CD8-positive, alpha-beta T cell (primary cell): ENCODE measurements at regions of chr9 and their contacts with region 1.

Region 1: GRCh38 chr9:137000177-137000883 is 4.0 kb upstream of the CLIC3 start:
- DNase-seq: peak in 2 of 9 experiments; percentile 65 to 80
- ATAC-seq: peak; percentile 32
- H3K4me3 ChIP-seq: peak overlapping the region in 1 of 2 experiments; percentile 18
- H3K4me3 Mint-ChIP-seq: peak overlapping the region; percentile 69
- H3K27ac ChIP-seq: peak overlapping the region; percentile 9 to 65
- H3K27ac Mint-ChIP-seq: peak overlapping the region; percentile 69
- H3K4me1 ChIP-seq: peaks cover 40% of the 10 kb centered on the region
- H3K4me1 Mint-ChIP-seq: peaks cover 39% of the 10 kb centered on the region
- H3K27me3 ChIP-seq: no peaks in the 10 kb centered on the region
- H3K27me3 Mint-ChIP-seq: no peaks in the 10 kb centered on the region
- CTCF ChIP-seq: no peak

Region 2: DNA sequence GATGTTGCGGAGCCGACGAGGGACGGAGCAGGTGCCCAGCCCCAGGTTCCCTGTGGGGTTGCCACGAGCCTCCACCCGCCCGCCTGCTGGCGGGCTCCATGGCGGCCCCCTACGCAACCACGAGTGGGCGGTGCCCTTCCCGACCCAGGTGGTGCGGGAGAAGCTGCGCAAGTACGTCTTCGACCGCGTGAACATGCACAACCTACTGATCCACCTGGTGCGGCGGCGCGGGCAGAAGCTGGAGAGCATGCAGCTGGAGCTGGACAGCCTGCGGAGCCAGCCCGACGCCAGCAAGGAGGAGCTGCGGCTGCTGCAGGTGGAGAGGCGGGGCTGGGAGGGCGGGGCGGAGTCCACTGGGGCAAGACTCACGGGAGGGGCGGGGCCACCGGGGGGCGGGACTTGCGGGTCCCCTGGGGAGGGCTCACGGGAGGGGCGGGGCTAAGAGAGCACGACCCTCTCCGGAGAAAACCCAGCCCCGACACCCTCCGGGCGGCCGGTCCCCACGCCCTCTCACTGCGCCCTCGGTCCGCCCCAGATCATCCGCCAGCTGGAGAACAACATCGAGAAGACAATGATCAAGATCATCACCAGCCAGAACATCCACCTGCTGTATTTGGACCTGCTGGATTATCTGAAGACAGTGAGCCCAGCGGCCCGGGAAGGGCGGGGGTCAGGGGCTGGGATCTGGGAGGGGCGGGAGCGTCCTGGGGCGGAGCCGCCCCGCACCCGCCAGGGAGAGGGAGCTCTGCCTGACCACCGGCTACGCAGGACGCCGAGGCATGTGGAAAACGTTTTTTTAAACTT is 200.3 kb before region 1 on chr9:
- CTCF ChIA-PET with region 1: no interaction called
- POLR2A ChIA-PET with region 1: no interaction called
- intact Hi-C with region 1: no loop called
- DNase-seq: peak; percentile 73 to 96 (median 92)
- ATAC-seq: peak; percentile 83
- H3K4me3 ChIP-seq: peak overlapping the region; percentile 61 to 75
- H3K4me3 Mint-ChIP-seq: peak overlapping the region; percentile 82
- H3K27ac ChIP-seq: peak overlapping the region in 1 of 2 experiments; percentile 35
- H3K27ac Mint-ChIP-seq: peak overlapping the region; percentile 60
- H3K4me1 ChIP-seq: peaks cover 35% of the 10 kb centered on the region
- H3K4me1 Mint-ChIP-seq: peaks cover 29% of the 10 kb centered on the region
- H3K27me3 ChIP-seq: peaks cover 0 to 2% of the 10 kb centered on the region in 2 experiments
- H3K27me3 Mint-ChIP-seq: no peaks in the 10 kb centered on the region
- CTCF ChIP-seq: no peak

Region 3: DNA sequence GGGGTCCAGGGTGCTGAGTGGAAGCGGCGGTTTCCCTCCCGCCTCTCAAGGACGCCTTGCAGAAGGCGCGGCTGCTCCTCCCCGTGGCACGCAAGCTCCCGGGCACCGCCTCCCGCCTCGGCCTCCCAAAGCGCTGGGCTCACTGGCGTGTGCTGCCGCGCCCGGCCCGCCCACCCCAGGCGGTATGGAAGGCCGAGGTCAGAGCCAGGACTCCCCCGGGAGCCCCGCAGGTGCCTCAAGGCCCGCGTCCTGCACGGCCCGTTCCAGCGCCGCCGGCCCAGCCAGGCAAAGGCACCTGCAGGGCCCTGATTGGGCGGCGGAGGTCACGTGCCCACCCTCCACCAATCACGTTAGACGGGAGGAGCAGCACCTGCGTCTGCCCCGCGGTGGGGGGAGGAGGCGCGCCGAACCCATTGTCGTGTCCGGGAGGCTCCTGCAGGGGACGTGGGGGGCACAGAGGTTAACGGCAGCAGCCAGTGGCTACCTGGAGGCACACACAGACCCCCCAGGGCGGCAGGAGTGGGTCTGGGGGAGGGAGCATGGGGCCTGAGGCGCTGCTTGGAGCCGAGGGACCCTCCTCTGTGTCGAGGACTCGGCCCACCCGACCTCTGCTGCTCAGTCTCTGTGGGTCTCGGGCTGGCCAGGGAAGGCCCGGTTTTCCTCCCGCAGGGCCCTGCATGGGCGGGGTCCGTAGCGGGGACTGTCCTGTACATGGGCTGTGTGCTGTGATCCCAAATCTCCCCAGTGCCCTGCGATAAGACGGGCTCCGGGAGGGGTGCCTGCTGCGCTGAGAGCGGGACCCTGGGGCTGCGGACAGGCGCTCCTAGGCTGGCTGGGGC is 50.3 kb before region 1 on chr9:
- CTCF ChIA-PET with region 1: interaction called, 10 read pairs
- POLR2A ChIA-PET with region 1: interaction called, 7 read pairs
- intact Hi-C with region 1: no loop called
- DNase-seq: peak; percentile 93 to 98 (median 97)
- ATAC-seq: peak; percentile 96
- H3K4me3 ChIP-seq: peak overlapping the region; percentile 68 to 70
- H3K4me3 Mint-ChIP-seq: peak overlapping the region; percentile 85
- H3K27ac ChIP-seq: peak overlapping the region; percentile 65 to 75
- H3K27ac Mint-ChIP-seq: peak overlapping the region; percentile 90
- H3K4me1 ChIP-seq: peaks cover 11% of the 10 kb centered on the region
- H3K4me1 Mint-ChIP-seq: peaks cover 14% of the 10 kb centered on the region
- H3K27me3 ChIP-seq: no peaks in the 10 kb centered on the region
- H3K27me3 Mint-ChIP-seq: no peaks in the 10 kb centered on the region
- CTCF ChIP-seq: peak; percentile 51

Region 4: GRCh38 chr9:137176302-137177182 is 176.2 kb after region 1 on chr9:
- CTCF ChIA-PET with region 1: no interaction called
- POLR2A ChIA-PET with region 1: no interaction called
- intact Hi-C with region 1: no loop called
- DNase-seq: peak in 3 of 9 experiments; percentile 23 to 55 (median 43)
- ATAC-seq: peak; percentile 61
- H3K4me3 ChIP-seq: no peak overlapping the region
- H3K4me3 Mint-ChIP-seq: no peak overlapping the region
- H3K27ac ChIP-seq: no peak overlapping the region
- H3K27ac Mint-ChIP-seq: no peak overlapping the region
- H3K4me1 ChIP-seq: peaks cover 8% of the 10 kb centered on the region
- H3K4me1 Mint-ChIP-seq: no peaks in the 10 kb centered on the region
- H3K27me3 ChIP-seq: peaks cover 0 to 7% of the 10 kb centered on the region in 2 experiments
- H3K27me3 Mint-ChIP-seq: no peaks in the 10 kb centered on the region
- CTCF ChIP-seq: peak; percentile 41